ENCODE measurements at regions of chr19 and their contacts with region 1.

Region 1: DNA sequence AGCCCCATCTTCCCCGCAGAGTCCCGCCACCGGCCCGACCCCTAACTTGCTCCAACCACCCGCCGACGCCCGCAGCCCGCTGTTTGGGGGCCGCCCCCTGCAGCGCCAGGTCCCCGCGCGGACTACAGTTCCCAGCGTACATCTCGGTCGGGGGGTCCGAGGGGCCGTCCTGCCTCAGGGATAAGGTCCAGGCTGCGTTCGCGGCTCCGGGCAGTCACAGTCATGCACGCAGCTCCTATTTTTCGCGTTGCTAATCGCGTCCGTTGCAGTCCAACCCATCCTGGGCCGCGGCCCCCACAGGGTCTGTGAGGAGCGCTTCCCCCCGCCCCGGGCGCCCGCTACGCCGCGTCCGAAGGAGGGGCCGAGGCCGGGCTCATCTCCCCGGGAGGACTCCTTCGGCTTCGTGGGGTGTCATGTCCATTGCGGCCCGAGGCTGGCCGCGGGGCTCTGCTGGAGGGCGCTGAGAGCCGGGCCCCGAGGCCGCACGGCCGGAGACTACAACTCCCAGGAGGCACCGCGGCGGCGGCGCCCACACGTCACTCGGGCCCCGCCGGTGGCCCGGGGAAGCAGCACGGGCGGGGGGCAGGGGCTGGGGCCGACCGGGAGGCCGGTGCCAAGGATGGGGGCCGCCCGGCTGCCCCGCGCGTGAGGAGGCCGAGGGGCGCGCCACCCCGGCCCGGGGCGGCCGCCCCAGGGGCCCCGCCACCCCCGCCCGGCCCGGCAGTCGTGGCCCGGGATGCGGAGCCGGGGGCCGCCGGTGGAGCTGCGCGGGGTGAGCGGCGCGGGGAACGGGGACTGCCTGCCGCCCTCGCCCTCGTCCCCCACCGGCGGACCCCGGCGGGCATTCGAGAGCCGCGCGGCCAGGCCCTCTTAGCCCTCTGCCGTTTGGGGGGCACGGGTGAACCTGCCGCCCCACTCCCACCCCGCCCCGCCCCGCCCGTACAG is at the start of gene MAP3K10:
- DNase-seq: peak; percentile 45
- H3K4me3 ChIP-seq: peak within 1 kb of the TSS; percentile 70 to 73 (median 72)
- H3K27ac ChIP-seq: peak within 1 kb of the TSS; percentile 24
- H3K4me1 ChIP-seq: peaks cover 9% of the 10 kb centered on the region
- H3K27me3 ChIP-seq: no peaks in the 10 kb centered on the region
- CTCF ChIP-seq: no peak
- total RNA-seq, gene MAP3K10: 7.8 to 16.0 TPM

Region 2: GRCh38 chr19:40147693-40148347 is 43.3 kb before region 1 on chr19:
- CTCF ChIA-PET with region 1: no interaction called
- dilution Hi-C with region 1: no loop called
- in situ Hi-C with region 1: no loop called
- intact Hi-C with region 1: no loop called
- DNase-seq: peak; percentile 82
- H3K4me3 ChIP-seq: no peak overlapping the region
- H3K27ac ChIP-seq: no peak overlapping the region
- H3K4me1 ChIP-seq: peaks cover 11% of the 10 kb centered on the region
- H3K27me3 ChIP-seq: no peaks in the 10 kb centered on the region
- CTCF ChIP-seq: no peak

Region 3: GRCh38 chr19:40165362-40165937 is 25.7 kb before region 1 on chr19:
- CTCF ChIA-PET with region 1: interaction called, 11 read pairs
- dilution Hi-C with region 1: no loop called
- in situ Hi-C with region 1: no loop called
- intact Hi-C with region 1: no loop called
- DNase-seq: no peak
- H3K4me3 ChIP-seq: no peak overlapping the region
- H3K27ac ChIP-seq: no peak overlapping the region
- H3K4me1 ChIP-seq: no peaks in the 10 kb centered on the region
- H3K27me3 ChIP-seq: no peaks in the 10 kb centered on the region
- CTCF ChIP-seq: peak; percentile 62 to 77

Region 4: GRCh38 chr19:40178756-40179155 is 12.4 kb before region 1 on chr19:
- CTCF ChIA-PET with region 1: no interaction called
- dilution Hi-C with region 1: no loop called
- in situ Hi-C with region 1: no loop called
- intact Hi-C with region 1: loop called (anchors 1 kb)
- DNase-seq: peak; percentile 39
- H3K4me3 ChIP-seq: no peak overlapping the region
- H3K27ac ChIP-seq: no peak overlapping the region
- H3K4me1 ChIP-seq: peaks cover 2% of the 10 kb centered on the region
- H3K27me3 ChIP-seq: no peaks in the 10 kb centered on the region
- CTCF ChIP-seq: no peak

Region 5: GRCh38 chr19:40231544-40232424 is 40.6 kb after region 1 on chr19:
- CTCF ChIA-PET with region 1: no interaction called
- dilution Hi-C with region 1: no loop called
- in situ Hi-C with region 1: no loop called
- intact Hi-C with region 1: no loop called
- DNase-seq: no peak
- H3K4me3 ChIP-seq: no peak overlapping the region
- H3K27ac ChIP-seq: no peak overlapping the region
- H3K4me1 ChIP-seq: peaks cover under 1% of the 10 kb centered on the region
- H3K27me3 ChIP-seq: no peaks in the 10 kb centered on the region
- CTCF ChIP-seq: no peak